ENCODE measurements at regions of chr13 and their contacts with region 1.

Region 1: DNA sequence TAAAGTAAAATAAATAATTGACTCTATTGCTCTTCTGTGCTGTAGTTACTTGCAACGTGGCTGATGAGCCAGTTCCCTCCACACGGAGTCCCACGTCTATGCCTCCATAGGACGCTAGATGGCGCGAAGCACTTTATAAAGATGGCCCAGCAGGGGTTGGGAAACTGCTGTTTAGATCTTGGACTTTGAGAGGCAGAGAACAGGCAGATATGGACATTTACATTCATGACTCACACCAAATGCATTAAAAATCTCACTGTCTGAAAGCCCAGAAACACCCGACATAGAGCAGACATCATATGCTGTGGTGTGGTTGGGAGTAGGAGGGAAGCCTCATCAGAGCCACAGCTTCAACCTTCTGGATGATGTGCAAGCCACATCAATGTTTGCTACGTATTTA is 643.1 kb upstream of the ARGLU1 start:
- DNase-seq: peak; percentile 73 to 83 (median 74)
- ATAC-seq: peak; percentile 87
- H3K4me3 ChIP-seq: no peak overlapping the region
- H3K27ac ChIP-seq: no peak overlapping the region
- H3K4me1 ChIP-seq: no peaks in the 10 kb centered on the region
- H3K27me3 ChIP-seq: no peaks in the 10 kb centered on the region
- CTCF ChIP-seq: peak; percentile 70 to 92 (median 87)
- POLR2A ChIP-seq: no peak

Region 2: DNA sequence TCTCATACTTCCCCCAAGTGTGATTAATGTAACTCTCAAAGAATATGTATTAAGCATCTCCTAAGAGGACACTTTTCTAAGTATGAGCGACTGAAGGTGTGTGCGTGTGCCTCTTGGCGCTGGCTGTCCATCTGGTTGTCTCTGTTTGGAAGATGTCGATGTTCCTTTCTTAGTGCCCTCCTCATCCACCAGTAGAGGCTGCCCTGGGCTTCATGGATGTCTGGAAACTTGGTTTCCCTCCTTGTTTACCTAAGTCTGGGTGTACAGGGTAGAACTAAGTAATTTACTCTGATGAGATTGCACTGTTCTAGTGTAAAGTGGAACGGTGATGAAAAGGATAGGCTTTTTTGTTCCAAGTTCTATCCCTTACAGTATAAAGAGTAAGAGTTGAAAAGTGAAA is 464.8 kb before region 1 on chr13:
- intact Hi-C with region 1: no loop called
- DNase-seq: no peak
- ATAC-seq: no peak
- H3K4me3 ChIP-seq: no peak overlapping the region
- H3K27ac ChIP-seq: no peak overlapping the region
- H3K4me1 ChIP-seq: no peaks in the 10 kb centered on the region
- H3K27me3 ChIP-seq: no peaks in the 10 kb centered on the region
- CTCF ChIP-seq: no peak
- POLR2A ChIP-seq: no peak

Region 3: DNA sequence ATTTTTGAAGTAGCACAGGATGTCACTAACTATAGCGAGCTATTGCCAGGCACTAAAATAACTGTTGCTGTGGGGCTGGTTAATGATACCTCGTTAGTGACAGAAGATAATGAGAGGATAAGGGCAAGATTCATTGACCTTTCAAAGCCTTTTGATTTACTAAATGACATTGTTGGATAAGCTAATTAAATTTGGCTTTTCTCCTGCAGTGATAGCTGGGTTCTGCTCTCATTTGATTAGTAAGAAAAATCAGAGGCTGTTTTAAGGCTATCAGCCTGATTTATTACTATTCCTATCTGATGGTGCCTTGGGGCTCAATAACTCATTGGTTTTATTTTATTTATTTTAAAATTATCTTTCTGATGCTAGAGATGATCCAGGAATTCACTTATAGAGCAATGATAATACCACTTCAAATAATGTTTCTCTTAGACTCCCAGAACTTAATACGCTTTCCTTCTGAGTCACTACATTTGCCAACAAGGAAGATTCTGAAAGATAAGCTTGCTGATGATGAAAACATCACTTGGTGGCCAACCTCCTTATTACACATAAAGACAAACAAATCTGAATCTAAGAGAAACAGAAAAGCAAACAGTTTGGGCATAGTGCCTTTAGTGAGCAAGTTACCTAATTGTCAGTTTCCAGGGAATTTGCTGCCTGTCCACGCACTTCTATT is 141.8 kb before region 1 on chr13:
- intact Hi-C with region 1: no loop called
- DNase-seq: no peak
- ATAC-seq: no peak
- H3K4me3 ChIP-seq: no peak overlapping the region
- H3K27ac ChIP-seq: no peak overlapping the region
- H3K4me1 ChIP-seq: no peaks in the 10 kb centered on the region
- H3K27me3 ChIP-seq: no peaks in the 10 kb centered on the region
- CTCF ChIP-seq: no peak
- POLR2A ChIP-seq: no peak

Region 4: DNA sequence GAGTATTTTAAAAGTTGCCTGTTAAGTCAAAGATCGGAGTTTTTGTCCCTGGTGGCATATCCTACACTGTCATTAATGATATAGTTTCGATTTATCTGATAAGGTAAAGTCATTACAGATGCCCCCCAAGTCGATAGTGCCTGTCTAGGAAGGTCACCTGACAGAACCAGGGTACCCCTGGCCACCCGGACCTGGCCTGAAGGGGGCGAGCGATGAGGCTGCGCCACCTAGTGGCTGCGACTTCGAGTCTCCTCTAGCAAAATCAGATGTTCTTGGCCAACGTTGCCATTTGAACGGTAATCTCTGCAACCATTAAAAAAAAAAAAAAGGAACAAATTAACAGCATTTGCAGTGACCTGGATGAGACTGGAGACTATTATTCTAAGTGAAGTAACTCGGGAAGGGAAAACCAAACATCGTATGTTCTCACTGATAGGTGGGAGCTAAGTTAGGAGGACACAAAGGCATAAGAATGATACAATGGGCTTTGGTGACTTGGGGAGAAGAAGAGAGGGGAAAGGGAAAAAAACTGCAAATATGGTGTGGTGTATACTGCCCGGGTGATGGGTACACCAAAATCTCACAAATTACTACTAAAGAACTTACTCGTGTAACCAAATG is 439.1 kb after region 1 on chr13:
- intact Hi-C with region 1: loop called (anchors 5 kb)
- DNase-seq: peak; percentile 35 to 62 (median 39)
- ATAC-seq: peak; percentile 59
- H3K4me3 ChIP-seq: no peak overlapping the region
- H3K27ac ChIP-seq: no peak overlapping the region
- H3K4me1 ChIP-seq: no peaks in the 10 kb centered on the region
- H3K27me3 ChIP-seq: no peaks in the 10 kb centered on the region
- CTCF ChIP-seq: peak; percentile 37 to 78 (median 69)
- POLR2A ChIP-seq: no peak